ENCODE measurements at regions of chr10 and their contacts with region 1.

Region 1: GRCh38 chr10:130136226-130137089 is at the start of gene GLRX3:
- DNase-seq: peak; percentile 88
- H3K4me3 ChIP-seq: peak within 1 kb of the TSS; percentile 84
- H3K27ac ChIP-seq: peak within 1 kb of the TSS; percentile 64
- H3K4me1 ChIP-seq: peaks cover 49% of the 10 kb centered on the region
- CTCF ChIP-seq: no peak
- total RNA-seq, gene GLRX3: 60.4 and 83.2 TPM in 2 replicates

Region 2: GRCh38 chr10:129466703-129467358 is 669.6 kb before region 1 on chr10 and contains the start of gene MGMT:
- CTCF ChIA-PET with region 1: no interaction called
- POLR2A ChIA-PET with region 1: no interaction called
- intact Hi-C with region 1: loop called (anchors 10 kb)
- DNase-seq: peak; percentile 87
- H3K4me3 ChIP-seq: peak within 1 kb of the TSS; percentile 75
- H3K27ac ChIP-seq: no peak within 1 kb of the TSS
- H3K4me1 ChIP-seq: peaks cover 11% of the 10 kb centered on the region
- CTCF ChIP-seq: no peak
- total RNA-seq, gene MGMT: 15.4 and 19.7 TPM in 2 replicates

Region 3: DNA sequence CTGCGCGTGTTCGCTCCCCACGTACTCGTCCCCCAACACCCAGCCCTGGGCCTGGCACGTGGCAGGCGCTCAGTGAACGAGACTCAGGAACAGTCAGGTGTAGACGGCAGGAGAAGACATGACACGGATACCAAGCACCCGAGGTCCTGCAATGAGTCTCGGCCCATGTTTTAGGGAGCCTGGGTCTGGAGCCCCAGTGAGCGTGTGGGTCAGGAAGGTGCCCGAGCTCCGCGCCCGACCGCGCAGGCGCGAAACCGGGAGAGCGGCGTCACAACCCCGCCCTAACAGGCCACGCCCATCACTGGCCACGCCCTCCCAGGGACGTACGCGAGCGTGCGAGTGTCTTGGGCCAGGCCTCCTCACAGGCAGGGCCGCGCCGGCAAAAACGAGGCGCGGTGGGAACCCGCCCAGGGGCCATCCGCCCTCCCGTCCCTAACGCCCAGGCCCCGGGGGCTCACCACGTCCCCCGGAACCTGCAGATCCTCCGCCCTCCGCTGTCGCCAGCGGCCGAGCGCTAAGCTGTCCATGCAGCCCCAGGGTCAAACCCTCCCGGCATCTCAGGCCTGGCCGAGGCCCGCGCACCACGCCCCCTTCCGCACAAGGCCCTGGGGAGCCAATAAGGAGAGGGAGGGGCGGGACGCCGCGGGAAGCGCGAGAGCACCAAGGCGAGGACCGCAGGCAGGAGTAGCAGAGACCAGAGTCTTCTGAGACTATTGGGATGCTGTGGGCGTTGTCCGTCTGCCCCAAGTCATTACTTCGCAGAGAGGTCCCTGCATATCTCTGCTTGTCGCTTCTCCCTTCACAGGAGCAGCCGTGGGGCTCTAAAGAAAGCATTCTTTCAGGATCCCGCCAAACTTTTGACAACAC is 26.0 kb before region 1 on chr10 and contains the start of gene C10orf143:
- CTCF ChIA-PET with region 1: interaction called, 5 read pairs
- POLR2A ChIA-PET with region 1: interaction called, 64 read pairs
- intact Hi-C with region 1: loop called (anchors 1 kb)
- DNase-seq: peak; percentile 96
- H3K4me3 ChIP-seq: peak within 1 kb of the TSS; percentile 95
- H3K27ac ChIP-seq: peak within 1 kb of the TSS; percentile 80
- H3K4me1 ChIP-seq: peaks cover 36% of the 10 kb centered on the region
- CTCF ChIP-seq: no peak
- total RNA-seq, gene C10orf143: 0.64 and 0.88 TPM in 2 replicates

Region 4: DNA sequence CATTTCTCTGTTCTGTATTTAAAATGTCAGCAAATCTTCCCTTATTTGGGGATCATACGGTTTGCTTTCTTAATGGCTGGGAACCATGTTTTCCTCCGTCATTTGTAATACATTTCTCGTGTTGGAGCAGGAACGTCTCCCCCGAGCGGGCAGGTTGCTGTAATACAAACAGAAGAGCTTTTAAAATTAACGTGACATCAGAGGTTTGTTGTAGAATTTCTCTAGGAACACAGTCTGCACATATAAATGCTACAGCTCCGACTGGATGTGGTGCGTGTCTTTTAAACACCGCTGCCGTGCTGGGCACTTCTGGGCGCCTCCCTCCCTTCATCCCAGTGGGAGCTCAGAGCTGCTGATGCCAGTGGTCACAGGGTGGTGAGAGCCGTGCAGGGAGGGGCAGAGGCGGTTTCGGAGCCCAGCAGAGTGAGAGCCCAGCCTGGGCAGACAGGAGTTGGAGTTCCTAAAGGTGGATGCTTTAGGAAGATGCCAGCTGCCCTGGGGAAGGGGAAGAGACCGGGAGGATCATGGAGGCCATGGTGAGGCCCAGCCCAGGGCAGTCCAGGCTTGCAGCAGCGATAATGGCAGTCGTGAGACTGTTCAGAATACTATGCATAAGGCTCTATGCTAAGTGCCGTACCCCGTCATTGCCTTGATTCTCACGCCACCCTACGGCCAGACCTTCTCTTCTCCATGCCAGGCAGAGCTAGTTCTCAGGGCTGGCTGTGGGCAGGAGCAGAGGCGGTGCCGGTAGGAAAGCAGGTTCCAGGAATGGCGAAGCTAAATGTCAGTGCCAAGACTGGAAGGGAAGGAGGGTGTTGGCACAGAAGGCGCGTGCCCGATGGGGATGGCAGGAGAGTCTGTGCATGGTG is 95.9 kb after region 1 on chr10:
- CTCF ChIA-PET with region 1: no interaction called
- POLR2A ChIA-PET with region 1: no interaction called
- intact Hi-C with region 1: no loop called
- DNase-seq: no peak
- H3K4me3 ChIP-seq: no peak overlapping the region
- H3K27ac ChIP-seq: no peak overlapping the region
- H3K4me1 ChIP-seq: no peaks in the 10 kb centered on the region
- CTCF ChIP-seq: no peak